Posterior cingulate gyrus (tissue), 11 donors: ENCODE measurements at regions of chr5 and their contacts with region 1.

Region 1: GRCh38 chr5:140639148-140639979 is at the start of gene TMCO6:
- DNase-seq: peak; percentile 94 to 99 (median 98)

Region 2: DNA sequence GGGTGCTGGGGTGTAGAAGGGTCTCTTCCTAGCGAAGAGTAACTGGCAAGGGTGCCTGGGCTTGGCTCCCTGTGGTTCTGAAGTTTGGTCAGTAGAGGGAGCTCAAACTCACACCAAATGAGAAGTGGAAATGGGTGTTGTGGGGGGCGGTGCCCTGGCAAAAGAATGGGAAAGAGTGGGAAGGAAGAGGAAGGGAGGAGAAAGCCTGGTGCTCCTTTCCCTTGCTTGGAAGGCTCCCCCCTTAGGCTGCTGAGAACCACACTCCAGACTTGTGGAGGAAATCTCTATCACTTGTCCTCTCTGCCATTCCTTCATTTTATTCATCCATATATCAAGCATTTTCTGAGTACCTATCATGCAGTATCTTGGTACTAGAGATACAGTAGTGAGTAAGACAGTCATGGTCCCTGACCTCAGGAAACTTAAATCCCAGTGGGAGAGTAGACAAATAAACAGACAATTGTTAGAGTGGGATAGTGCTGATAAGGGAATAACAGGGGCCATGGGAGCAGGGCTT is 266.3 kb before region 1 on chr5:
- intact Hi-C with region 1: loop called (anchors 2 kb)
- DNase-seq: peak in 9 of 10 donors; percentile 46 to 93 (median 61)

Region 3: GRCh38 chr5:140564196-140565023 is 75.0 kb before region 1 on chr5 and contains the starts of genes APBB3 and SLC35A4:
- intact Hi-C with region 1: loop called (anchors 2 kb)
- DNase-seq: peak; percentile 95 to 100 (median 97)

Region 4: GRCh38 chr5:140690941-140691924 is 51.9 kb after region 1 on chr5 and contains the starts of genes HARS1 and HARS2:
- intact Hi-C with region 1: loop called (anchors 2 kb)
- DNase-seq: peak; percentile 88 to 99 (median 92)

Region 5: DNA sequence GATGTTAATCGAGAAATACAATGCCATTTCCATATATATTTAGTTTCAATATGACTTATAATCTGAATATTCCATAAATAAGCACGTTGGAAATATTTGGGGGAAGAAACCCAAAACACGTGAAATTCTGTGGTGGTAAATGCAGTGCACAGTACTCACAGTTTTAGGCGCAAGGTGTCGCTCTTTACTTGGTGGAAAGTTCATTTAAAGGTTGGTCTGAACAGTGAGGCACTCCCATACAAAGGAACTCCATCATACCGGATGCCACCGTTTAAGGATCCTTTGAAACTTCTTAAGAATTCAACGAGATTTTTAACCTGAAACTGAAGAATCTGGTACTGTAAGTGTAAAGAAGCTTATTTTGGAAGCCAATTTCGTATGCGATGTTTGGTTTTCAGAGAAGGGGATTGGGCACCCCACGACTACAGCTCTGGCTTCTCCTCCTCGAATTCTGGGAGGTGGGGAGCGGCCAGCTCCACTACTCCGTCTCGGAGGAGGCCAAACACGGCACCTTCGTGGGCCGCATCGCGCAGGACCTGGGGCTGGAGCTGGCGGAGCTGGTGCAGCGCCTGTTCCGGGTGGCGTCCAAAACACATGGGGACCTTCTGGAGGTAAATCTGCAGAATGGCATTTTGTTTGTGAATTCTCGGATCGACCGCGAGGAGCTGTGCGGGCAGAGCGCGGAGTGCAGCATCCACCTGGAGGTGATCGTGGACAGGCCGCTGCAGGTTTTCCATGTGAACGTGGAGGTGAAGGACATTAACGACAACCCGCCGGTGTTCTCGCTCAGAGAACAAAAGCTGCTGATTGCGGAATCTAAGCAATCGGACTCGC is 229.6 kb after region 1 on chr5 and contains the start of gene PCDHA11:
- intact Hi-C with region 1: no loop called
- DNase-seq: peak in 2 of 10 donors; percentile 5 to 75